ENCODE measurements at regions of chr7 and their contacts with region 1.

Region 1: GRCh38 chr7:144941127-144941526 is 105.3 kb upstream of the TPK1 start:
- DNase-seq: no peak
- H3K4me3 ChIP-seq: no peak overlapping the region
- H3K27ac ChIP-seq: no peak overlapping the region
- H3K4me1 ChIP-seq: no peaks in the 10 kb centered on the region
- H3K27me3 ChIP-seq: no peaks in the 10 kb centered on the region
- CTCF ChIP-seq: no peak
- EP300 ChIP-seq: no peak
- POLR2A ChIP-seq: no peak

Region 2: GRCh38 chr7:144892761-144893160 is 48.4 kb before region 1 on chr7:
- intact Hi-C with region 1: loop called in 1 of 4 experiments (anchors 2 kb)
- DNase-seq: no peak
- H3K4me3 ChIP-seq: no peak overlapping the region
- H3K27ac ChIP-seq: no peak overlapping the region
- H3K4me1 ChIP-seq: no peaks in the 10 kb centered on the region
- H3K27me3 ChIP-seq: no peaks in the 10 kb centered on the region
- CTCF ChIP-seq: no peak
- EP300 ChIP-seq: no peak
- POLR2A ChIP-seq: no peak